Right ventricle myocardium inferior (tissue), 1 donor: ENCODE measurements at regions of chr1 and their contacts with region 1.

Region 1: DNA sequence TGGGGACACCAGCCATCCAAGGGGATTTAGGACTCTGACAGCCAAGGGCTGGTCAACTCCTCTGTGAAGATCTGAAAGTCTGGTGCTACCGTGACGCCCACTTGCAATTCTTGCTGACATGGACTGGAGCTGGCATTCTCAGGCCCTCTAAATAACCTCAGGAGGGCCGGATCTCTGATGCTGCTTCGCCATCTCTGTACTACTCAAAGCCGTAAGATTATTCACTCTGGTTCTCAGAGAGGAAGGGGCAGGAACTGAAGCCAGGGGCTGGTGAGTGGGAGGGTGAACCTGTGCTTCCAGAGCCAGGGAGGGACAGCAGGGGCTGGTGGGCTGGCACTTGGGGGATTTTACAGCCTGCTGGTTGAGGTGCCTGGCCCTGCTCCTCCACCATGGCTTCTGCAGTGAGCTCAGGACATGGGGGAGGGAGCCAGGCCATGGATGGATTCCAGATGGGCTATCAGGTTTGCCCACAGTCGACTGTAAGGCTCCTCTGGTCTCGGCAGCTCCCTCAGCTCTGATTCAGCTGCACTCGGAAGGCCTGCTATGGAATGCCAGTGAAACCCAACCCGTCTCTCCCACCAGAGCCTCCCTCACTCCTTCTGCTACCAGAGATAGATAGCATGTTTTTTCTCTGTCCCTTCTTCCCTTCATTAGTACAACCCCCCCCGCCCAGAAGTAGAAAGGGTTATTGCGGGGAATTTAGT is 84.5 kb downstream of the PLXNA2 start:
- DNase-seq: no peak
- ATAC-seq: peak; percentile 18

Region 2: DNA sequence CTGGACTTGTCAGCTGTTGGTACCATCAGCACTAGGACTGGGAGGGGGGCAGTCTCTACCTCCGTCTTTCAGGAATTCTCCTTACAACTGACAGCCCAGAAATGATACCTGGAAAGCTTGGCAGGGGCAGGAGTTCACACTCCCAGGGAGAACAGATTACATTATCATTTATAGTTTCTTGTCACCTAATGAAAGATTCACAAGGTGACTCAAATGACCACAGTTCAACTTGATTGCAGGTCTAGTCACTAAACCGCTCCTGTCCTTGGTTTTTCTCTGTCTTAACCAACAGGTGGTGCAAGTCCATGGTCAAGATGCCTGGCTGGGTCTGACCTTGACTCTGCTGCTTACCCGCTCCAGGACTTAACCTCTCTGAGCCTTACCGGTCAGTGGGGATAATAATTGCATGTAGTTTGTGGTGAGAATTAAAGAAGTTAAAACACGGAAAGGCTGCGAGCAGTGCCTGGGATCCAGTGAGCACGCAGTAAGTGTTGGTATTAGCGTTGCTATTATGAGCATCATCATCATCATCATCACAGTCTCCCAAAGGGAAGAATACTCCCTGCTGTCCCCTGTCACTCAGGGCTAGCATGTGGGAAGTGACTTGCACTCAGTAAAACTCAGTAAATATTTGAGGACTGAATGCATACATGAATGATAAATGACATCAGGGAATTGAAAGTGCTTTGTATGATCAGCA is 123.4 kb before region 1 on chr1:
- intact Hi-C with region 1: no loop called
- DNase-seq: no peak
- ATAC-seq: no peak

Region 3: DNA sequence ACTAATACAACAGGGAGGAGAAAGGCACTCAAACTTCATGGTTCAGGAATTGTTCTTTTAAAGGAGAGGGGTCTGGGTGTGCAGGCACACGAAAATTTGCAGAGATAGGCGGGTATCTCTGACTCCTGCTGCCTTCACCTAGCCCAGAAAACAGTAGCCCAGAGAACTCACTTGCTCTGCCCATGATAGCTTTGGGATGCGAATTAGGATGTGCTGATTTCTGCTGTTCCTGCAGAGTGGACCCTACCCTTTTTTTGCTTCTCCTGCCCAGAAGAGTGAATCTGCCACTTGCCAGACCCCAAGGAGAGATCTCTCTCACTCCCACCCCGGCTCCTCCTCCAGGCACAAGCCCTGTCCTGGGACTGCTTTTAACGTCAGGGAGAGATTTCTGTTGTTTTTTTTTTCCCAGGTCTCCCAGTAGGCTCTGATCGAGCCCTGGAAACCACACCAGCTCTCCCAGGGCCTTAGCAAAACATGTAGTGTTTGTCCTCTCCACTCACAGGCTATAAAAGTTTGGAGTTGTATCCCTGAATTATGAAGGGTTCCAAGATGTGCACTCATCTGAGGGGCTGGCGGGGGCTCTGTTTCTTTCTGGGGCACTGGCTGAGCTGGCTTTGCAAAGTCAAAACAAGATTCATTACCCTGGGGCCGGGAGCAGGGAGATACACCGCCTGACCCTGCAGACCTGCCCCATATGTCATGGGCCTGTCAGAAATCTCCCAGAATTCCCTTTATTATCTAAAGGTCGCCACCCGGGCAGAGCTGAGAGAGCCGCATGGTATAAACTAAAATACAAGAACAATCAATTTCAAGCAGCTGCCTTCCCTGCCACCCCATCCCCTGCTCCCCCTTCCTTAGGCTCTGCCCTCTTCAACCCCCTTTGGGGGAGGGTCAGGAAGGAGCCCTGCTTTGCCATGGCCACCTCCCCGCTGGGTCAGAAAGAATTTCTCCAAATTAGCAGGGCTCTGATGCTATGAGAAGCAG is 66.5 kb after region 1 on chr1:
- intact Hi-C with region 1: loop called (anchors 5 kb)
- DNase-seq: no peak
- ATAC-seq: no peak